ENCODE measurements at regions of chr17 and their contacts with region 1.

Region 1: DNA sequence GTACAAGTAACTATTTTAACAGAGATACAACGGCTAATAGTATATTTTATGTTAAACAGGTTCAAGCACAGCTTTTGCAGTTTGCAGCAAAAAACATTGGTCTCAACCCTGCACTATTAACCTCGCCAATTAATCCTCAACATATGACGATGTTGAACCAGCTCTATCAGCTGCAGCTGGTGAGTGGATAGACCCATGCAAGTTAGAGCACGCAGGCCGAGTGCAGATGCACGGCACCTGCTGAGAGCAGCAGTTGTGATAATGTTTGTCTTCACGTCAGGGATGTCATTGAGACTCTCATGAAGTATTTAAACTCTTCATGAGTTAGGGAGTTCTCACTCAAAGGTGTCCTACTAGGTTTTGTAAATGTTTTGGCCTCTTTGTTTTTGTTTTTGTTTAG is 45.6 kb downstream of the TMC6 start:
- DNase-seq: no peak
- H3K4me3 Mint-ChIP-seq: no peak overlapping the region
- H3K27ac Mint-ChIP-seq: no peak overlapping the region
- H3K4me1 Mint-ChIP-seq: peaks cover 5% of the 10 kb centered on the region
- H3K27me3 Mint-ChIP-seq: no peaks in the 10 kb centered on the region

Region 2: GRCh38 chr17:77061669-77062068 is 1021.3 kb before region 1 on chr17:
- intact Hi-C with region 1: no loop called
- DNase-seq: no peak
- H3K4me3 Mint-ChIP-seq: no peak overlapping the region
- H3K27ac Mint-ChIP-seq: no peak overlapping the region
- H3K4me1 Mint-ChIP-seq: no peaks in the 10 kb centered on the region
- H3K27me3 Mint-ChIP-seq: peaks cover 12% of the 10 kb centered on the region

Region 3: DNA sequence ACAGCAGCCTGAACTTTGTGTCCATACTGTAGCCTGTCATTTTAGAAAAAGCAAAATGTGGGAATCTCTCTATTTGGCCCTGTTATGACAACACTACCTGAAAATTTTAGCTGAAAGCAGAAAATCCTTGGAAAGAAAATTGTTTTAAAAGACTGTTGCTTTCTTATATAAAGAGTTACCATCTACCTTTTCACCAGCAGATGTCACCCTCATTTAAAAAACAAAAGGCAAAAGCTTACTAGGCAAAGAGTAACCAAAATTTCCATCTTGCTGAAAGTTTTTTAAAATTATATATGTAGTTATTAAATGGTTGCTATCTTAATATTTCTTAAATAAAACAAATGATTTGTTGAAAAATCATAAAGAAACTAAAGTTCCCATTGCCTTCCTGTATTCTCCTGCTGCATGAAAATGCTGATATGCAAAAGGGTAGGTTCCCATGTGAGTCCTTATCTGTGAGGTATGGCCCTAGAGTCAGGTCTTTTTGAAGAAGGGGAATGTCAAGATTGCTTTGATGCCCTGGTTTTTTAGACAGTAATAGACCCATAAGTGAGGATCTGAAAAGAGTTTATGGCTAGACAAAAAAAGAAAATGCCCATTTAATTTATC is 63.5 kb before region 1 on chr17:
- intact Hi-C with region 1: loop called (anchors 1 kb)
- DNase-seq: no peak
- H3K4me3 Mint-ChIP-seq: no peak overlapping the region
- H3K27ac Mint-ChIP-seq: no peak overlapping the region
- H3K4me1 Mint-ChIP-seq: peaks cover 27% of the 10 kb centered on the region
- H3K27me3 Mint-ChIP-seq: no peaks in the 10 kb centered on the region

Region 4: DNA sequence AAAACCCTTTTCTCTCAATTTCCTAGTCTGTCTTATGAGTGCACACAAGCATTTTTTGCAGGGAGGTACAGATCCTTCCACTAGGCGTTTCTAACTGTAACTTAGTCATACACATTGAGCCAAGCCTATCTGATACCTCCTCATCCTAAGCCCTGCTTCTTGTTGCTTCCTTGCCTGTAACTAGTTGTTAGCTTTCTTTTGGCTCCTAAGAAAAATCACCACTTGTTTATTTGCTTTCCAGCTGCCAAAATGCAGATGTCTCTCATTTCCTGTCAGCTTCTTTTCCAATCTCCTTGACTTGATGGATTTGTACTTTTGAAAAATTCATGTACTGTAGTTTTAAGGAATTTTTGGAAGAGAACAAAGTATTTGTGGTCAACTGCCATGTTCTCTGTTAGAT is 50.8 kb before region 1 on chr17:
- intact Hi-C with region 1: no loop called
- DNase-seq: no peak
- H3K4me3 Mint-ChIP-seq: no peak overlapping the region
- H3K27ac Mint-ChIP-seq: no peak overlapping the region
- H3K4me1 Mint-ChIP-seq: peaks cover 11% of the 10 kb centered on the region
- H3K27me3 Mint-ChIP-seq: no peaks in the 10 kb centered on the region

Region 5: DNA sequence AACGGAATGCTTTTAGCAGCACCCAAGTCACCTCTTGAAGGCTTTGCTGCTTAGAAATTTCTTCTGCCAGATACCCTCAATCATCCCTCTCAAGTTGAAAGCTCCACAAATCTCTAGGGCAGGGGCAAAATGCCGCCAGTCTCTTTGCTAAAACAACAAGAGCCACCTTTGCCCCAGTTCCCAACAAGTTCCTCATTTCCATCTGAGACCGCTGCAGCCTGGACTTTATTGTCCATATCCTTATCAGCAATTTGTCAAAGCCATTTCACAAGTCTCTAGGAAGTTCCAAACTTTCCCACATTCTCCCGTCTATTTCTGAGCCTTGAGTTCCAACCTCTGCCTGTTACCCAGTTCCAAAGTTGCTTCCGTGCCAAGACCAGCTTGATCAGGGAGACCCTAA is 18.1 kb after region 1 on chr17:
- intact Hi-C with region 1: no loop called
- DNase-seq: no peak
- H3K4me3 Mint-ChIP-seq: no peak overlapping the region
- H3K27ac Mint-ChIP-seq: no peak overlapping the region
- H3K4me1 Mint-ChIP-seq: no peaks in the 10 kb centered on the region
- H3K27me3 Mint-ChIP-seq: no peaks in the 10 kb centered on the region

Region 6: DNA sequence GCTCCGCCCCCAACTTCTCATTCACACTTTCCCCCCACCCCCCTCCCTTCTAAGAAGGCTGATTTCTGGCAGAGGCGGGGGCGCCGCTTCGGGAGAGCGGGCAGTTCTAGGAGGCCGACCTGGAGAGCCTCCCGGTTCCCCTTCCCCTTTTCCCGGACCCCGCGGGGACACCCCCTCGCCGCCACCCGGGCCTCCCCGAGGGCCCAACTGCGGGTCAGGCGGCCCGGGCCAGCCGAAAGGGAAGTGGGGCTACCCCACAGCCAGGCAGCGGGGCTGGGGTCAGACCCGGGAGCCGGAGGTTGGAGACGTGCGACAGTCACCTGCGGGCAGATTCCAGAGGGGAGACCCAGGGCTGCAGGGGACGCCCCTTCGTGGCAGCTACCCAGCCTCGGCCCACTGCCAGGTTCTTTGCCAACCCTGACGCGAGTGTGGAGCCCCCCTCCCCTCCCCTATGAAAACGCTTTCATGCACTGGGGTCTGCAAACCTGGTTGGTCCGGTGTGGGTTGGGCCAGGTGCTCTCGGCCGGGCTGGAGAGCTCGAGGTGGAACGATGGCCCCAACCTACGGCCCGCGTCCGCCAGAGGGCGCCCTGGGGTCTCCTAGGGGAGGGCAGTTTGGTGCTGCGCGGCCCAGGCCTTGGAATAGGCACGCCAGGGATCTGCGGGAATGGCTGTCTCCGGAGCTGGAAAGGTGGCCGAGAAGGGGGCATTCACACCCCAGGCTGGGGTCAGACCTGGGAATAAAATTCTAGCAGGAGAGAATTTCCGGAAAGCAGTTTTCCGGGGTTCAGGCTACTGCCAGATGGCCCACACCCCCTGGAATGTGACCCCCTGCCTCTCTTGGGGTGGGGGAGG is 277.6 kb after region 1 on chr17:
- intact Hi-C with region 1: no loop called
- DNase-seq: peak; percentile 87
- H3K4me3 Mint-ChIP-seq: peak overlapping the region; percentile 79
- H3K27ac Mint-ChIP-seq: peak overlapping the region; percentile 85
- H3K4me1 Mint-ChIP-seq: peaks cover 48% of the 10 kb centered on the region
- H3K27me3 Mint-ChIP-seq: no peaks in the 10 kb centered on the region